K562 (cell line): ENCODE measurements at regions of chr10 and their contacts with region 1.

Region 1: GRCh38 chr10:92972066-92972870 is 88.3 kb upstream of the CYP26C1 start:
- DNase-seq: peak; percentile 56 to 84 (median 60)
- ATAC-seq: peak; percentile 91
- H3K4me3 ChIP-seq: no peak overlapping the region
- H3K27ac ChIP-seq: peak overlapping the region; percentile 97
- H3K4me1 ChIP-seq: peaks cover 8 to 23% of the 10 kb centered on the region in 2 experiments; a peak in 3 of 5 replicates
- H3K27me3 ChIP-seq: no peaks in the 10 kb centered on the region
- CTCF ChIP-seq: no peak
- EP300 ChIP-seq: peak; percentile 70; the same call in 1 of the 2 replicates
- POLR2A ChIP-seq: no peak
- RAD21 ChIP-seq: no peak

Region 2: GRCh38 chr10:93006435-93007039 is 34.3 kb after region 1 on chr10:
- CTCF ChIA-PET with region 1: no interaction called
- POLR2A ChIA-PET with region 1: no interaction called
- in situ Hi-C with region 1: no loop called
- intact Hi-C with region 1: loop called (anchors 5 kb)
- DNase-seq: peak in 2 of 4 experiments; percentile 7 to 44
- ATAC-seq: peak; percentile 79
- H3K4me3 ChIP-seq: no peak overlapping the region
- H3K27ac ChIP-seq: no peak overlapping the region
- H3K4me1 ChIP-seq: no peaks in the 10 kb centered on the region; a peak in 3 of 5 replicates
- H3K27me3 ChIP-seq: no peaks in the 10 kb centered on the region
- CTCF ChIP-seq: peak; percentile 45 to 68 (median 58); a peak in 5 of 6 replicates
- EP300 ChIP-seq: no peak
- POLR2A ChIP-seq: no peak
- RAD21 ChIP-seq: peak; percentile 33 to 67; a peak in 3 of 4 replicates

Region 3: GRCh38 chr10:93080350-93081046 is 108.2 kb after region 1 on chr10:
- CTCF ChIA-PET with region 1: no interaction called
- POLR2A ChIA-PET with region 1: no interaction called
- in situ Hi-C with region 1: no loop called
- intact Hi-C with region 1: loop called (anchors 1 kb)
- DNase-seq: peak; percentile 67 to 76 (median 73)
- ATAC-seq: peak; percentile 85
- H3K4me3 ChIP-seq: no peak overlapping the region
- H3K27ac ChIP-seq: no peak overlapping the region
- H3K4me1 ChIP-seq: peaks cover 0 to 12% of the 10 kb centered on the region in 2 experiments; a peak in 3 of 5 replicates
- H3K27me3 ChIP-seq: peaks cover 2 to 11% of the 10 kb centered on the region in 2 experiments; a peak in 3 of 5 replicates
- CTCF ChIP-seq: peak; percentile 72 to 86 (median 77)
- EP300 ChIP-seq: no peak
- POLR2A ChIP-seq: no peak
- RAD21 ChIP-seq: peak; percentile 63 to 82